CD8-positive, alpha-beta memory T cell (primary cell): ENCODE measurements at regions of chr17 and their contacts with region 1.

Region 1: GRCh38 chr17:78759203-78759968 is 22.7 kb downstream of the CYTH1 start:
- DNase-seq: peak; percentile 59 to 94 (median 85)
- H3K4me3 ChIP-seq: peak overlapping the region; percentile 38
- H3K4me3 Mint-ChIP-seq: peak overlapping the region; percentile 20 to 84 (median 77)
- H3K27ac ChIP-seq: peak overlapping the region; percentile 91
- H3K27ac Mint-ChIP-seq: peak overlapping the region; percentile 90 to 99 (median 97)
- H3K4me1 ChIP-seq: peaks cover 92% of the 10 kb centered on the region
- H3K4me1 Mint-ChIP-seq: peaks cover 79 to 91% (median 89%) of the 10 kb centered on the region in 3 donors
- H3K27me3 ChIP-seq: no peaks in the 10 kb centered on the region
- H3K27me3 Mint-ChIP-seq: peaks cover 0 to 1% of the 10 kb centered on the region in 2 donors

Region 2: DNA sequence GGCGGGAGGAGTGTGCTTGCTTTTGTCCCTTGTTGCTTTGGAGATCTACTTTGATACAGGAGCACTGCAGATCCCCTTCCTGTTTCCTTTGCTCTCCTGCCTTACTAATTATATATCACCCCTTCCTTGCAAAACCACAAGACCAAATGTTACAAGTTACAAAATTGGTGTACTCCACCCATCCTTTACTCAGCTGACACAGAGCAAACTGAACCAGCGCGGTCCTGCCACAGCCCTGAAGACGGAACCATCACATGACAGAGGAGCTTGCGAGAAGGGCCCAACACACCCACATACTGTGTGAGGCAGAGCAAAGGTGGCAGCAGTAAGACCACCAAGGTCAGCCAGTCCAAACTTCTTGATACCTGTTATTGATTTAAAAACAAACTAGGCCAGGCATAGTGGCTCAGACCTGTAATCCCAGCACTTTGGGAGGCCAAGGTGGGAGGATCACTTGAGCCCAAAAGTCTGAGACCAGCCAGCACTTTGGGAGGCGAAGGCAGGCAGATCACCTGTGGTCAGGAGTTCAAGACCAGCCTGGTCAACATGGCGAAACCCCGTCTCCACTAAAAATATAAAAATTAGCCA is 10.6 kb before region 1 on chr17:
- CTCF ChIA-PET with region 1: interaction called, 12 read pairs
- POLR2A ChIA-PET with region 1: interaction called, 12 read pairs
- DNase-seq: peak; percentile 61 to 89 (median 88)
- H3K4me3 ChIP-seq: peak overlapping the region; percentile 65
- H3K4me3 Mint-ChIP-seq: peak overlapping the region; percentile 69 to 88 (median 78)
- H3K27ac ChIP-seq: peak overlapping the region; percentile 73
- H3K27ac Mint-ChIP-seq: peak overlapping the region; percentile 79 to 98 (median 90)
- H3K4me1 ChIP-seq: peaks cover 96% of the 10 kb centered on the region
- H3K4me1 Mint-ChIP-seq: peaks cover 93 to 100% (median 100%) of the 10 kb centered on the region in 3 donors
- H3K27me3 ChIP-seq: no peaks in the 10 kb centered on the region
- H3K27me3 Mint-ChIP-seq: no peaks in the 10 kb centered on the region

Region 3: GRCh38 chr17:78791840-78792694 is 32.7 kb after region 1 on chr17:
- CTCF ChIA-PET with region 1: no interaction called
- POLR2A ChIA-PET with region 1: no interaction called
- DNase-seq: peak in 1 of 5 donors; percentile 26
- H3K4me3 ChIP-seq: no peak overlapping the region
- H3K4me3 Mint-ChIP-seq: peak overlapping the region in 2 of 7 donors; percentile 23 to 44
- H3K27ac ChIP-seq: no peak overlapping the region
- H3K27ac Mint-ChIP-seq: peak overlapping the region; percentile 8 to 91 (median 62)
- H3K4me1 ChIP-seq: peaks cover 52% of the 10 kb centered on the region
- H3K4me1 Mint-ChIP-seq: peaks cover 51 to 65% (median 64%) of the 10 kb centered on the region in 3 donors
- H3K27me3 ChIP-seq: no peaks in the 10 kb centered on the region
- H3K27me3 Mint-ChIP-seq: peaks cover 0 to 3% of the 10 kb centered on the region in 2 donors